ENCODE measurements at regions of chr1 and their contacts with region 1.

Region 1: GRCh38 chr1:85259118-85259911 is at the start of gene C1orf52:
- DNase-seq: peak; percentile 88 to 99
- H3K4me3 ChIP-seq: peak within 1 kb of the TSS; percentile 88
- H3K4me1 ChIP-seq: peaks cover 18% of the 10 kb centered on the region
- H3K27me3 ChIP-seq: no peaks in the 10 kb centered on the region

Region 2: DNA sequence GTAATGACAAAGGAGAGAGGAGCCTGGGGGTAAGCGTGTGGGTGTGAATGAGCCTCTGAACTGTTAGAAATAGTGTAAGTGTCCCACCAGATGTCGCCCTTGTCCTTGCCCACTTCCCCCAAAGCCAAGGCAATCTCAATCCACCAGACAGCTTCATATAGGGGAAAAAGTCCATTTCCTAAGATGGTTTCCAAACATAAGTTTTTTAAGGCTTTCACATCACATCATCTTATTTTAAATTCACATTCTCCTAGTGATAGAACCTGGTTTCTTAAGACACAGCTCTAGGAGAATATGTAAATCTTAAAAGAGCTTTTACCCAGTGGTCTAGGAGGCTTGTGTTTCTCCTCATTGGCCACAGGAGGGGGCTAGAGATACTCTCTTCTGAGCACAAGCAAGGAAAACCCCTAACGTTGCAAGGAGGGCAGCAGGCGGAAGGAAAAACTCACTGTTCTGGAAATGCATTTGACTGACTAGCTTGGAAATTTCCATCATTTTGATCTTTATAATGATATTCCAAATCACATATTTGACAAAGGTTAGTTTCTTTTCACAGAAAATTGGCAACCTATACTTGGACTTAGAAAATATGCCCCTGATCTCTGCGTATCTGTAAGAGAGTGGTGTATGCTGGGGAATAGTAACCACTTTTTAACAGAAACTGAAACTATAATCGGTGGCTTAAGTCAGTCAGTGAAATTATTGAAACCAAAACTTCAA is 314.4 kb before region 1 on chr1:
- in situ Hi-C with region 1: loop called (anchors 5 kb)
- DNase-seq: peak; percentile 82 to 85
- H3K4me3 ChIP-seq: no peak overlapping the region
- H3K4me1 ChIP-seq: peaks cover 27% of the 10 kb centered on the region
- H3K27me3 ChIP-seq: no peaks in the 10 kb centered on the region

Region 3: GRCh38 chr1:85116856-85117255 is 142.5 kb before region 1 on chr1:
- in situ Hi-C with region 1: no loop called
- DNase-seq: no peak
- H3K4me3 ChIP-seq: no peak overlapping the region
- H3K4me1 ChIP-seq: no peaks in the 10 kb centered on the region
- H3K27me3 ChIP-seq: no peaks in the 10 kb centered on the region

Region 4: GRCh38 chr1:85188530-85188929 is 70.8 kb before region 1 on chr1:
- in situ Hi-C with region 1: no loop called
- DNase-seq: no peak
- H3K4me3 ChIP-seq: no peak overlapping the region
- H3K4me1 ChIP-seq: no peaks in the 10 kb centered on the region
- H3K27me3 ChIP-seq: no peaks in the 10 kb centered on the region

Region 5: GRCh38 chr1:85484264-85484663 is 224.9 kb after region 1 on chr1:
- in situ Hi-C with region 1: no loop called
- DNase-seq: no peak
- H3K4me3 ChIP-seq: no peak overlapping the region
- H3K4me1 ChIP-seq: peaks cover 9% of the 10 kb centered on the region
- H3K27me3 ChIP-seq: no peaks in the 10 kb centered on the region

Measured in HAP-1 (cell line).